ENCODE measurements at regions of chr11 and their contacts with region 1.

Region 1: DNA sequence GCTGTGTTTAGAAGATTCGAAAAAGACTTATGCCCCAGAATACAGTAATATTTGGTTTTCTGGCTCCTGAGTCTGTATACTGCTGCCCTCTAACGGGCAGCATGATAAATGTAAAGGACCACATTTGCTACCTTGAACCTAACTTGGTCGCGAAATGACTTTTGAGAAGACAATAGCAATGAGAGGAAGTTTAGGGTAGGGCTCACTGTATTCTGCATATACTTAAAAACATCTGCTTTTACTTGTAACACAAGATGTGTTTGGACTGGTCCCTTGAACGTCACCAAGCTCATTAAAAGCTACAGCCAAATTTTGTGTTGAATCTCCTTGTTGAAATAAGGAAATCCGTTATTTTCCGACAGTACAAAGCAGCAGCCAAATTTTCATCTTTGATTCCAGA is 309.1 kb downstream of the SWAP70 start:
- DNase-seq: peak; percentile 28
- H3K4me3 Mint-ChIP-seq: no peak overlapping the region
- H3K27ac Mint-ChIP-seq: no peak overlapping the region
- H3K4me1 Mint-ChIP-seq: no peaks in the 10 kb centered on the region
- H3K27me3 Mint-ChIP-seq: no peaks in the 10 kb centered on the region

Region 2: GRCh38 chr11:9861860-9862725 is 110.9 kb before region 1 on chr11:
- CTCF ChIA-PET with region 1: interaction called, 27 read pairs
- POLR2A ChIA-PET with region 1: no interaction called
- intact Hi-C with region 1: loop called (anchors 1 kb)
- DNase-seq: peak; percentile 65
- H3K4me3 Mint-ChIP-seq: no peak overlapping the region
- H3K27ac Mint-ChIP-seq: no peak overlapping the region
- H3K4me1 Mint-ChIP-seq: peaks cover 27% of the 10 kb centered on the region
- H3K27me3 Mint-ChIP-seq: no peaks in the 10 kb centered on the region

Region 3: DNA sequence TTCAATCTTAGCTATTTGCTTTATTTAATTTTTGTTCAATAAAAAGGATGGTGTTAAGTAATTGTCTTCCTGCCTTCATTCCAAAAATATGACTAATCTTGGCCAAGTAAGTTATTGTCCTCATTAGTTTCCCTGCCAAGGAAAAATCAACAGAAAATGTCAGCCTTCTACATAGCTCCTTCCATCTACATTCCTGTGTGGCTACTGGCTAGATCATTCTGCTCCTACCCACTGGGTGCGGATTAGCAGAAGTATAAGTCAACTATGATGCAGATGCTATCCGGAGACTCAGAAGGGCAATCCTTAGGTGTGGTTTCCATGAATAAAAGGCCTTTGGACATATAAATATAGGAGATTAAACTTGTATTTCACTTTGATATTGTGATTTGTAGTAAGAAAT is 166.7 kb after region 1 on chr11:
- CTCF ChIA-PET with region 1: no interaction called
- POLR2A ChIA-PET with region 1: no interaction called
- intact Hi-C with region 1: no loop called
- DNase-seq: no peak
- H3K4me3 Mint-ChIP-seq: no peak overlapping the region
- H3K27ac Mint-ChIP-seq: no peak overlapping the region
- H3K4me1 Mint-ChIP-seq: no peaks in the 10 kb centered on the region
- H3K27me3 Mint-ChIP-seq: no peaks in the 10 kb centered on the region

Region 4: DNA sequence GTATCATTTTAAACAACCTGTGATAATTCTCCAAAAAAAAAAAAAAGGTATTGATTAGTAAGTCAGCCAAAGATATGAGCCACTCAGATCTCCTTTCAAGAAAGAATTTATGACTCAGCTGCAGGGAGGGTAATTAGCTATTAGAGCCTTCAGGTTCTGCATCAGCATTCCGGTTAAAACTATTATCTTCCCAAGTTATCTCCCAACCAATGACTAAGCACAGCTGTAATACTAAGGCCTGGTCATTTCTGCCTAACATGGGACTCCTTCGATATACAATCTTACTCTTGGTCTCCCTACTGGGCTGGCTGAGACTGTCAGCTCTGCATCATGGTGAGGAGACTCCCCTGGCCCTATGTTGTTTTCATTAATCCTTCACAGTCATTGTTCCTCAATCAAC is 260.6 kb after region 1 on chr11:
- CTCF ChIA-PET with region 1: no interaction called
- POLR2A ChIA-PET with region 1: no interaction called
- intact Hi-C with region 1: no loop called
- DNase-seq: no peak
- H3K4me3 Mint-ChIP-seq: no peak overlapping the region
- H3K27ac Mint-ChIP-seq: no peak overlapping the region
- H3K4me1 Mint-ChIP-seq: no peaks in the 10 kb centered on the region
- H3K27me3 Mint-ChIP-seq: no peaks in the 10 kb centered on the region

Region 5: DNA sequence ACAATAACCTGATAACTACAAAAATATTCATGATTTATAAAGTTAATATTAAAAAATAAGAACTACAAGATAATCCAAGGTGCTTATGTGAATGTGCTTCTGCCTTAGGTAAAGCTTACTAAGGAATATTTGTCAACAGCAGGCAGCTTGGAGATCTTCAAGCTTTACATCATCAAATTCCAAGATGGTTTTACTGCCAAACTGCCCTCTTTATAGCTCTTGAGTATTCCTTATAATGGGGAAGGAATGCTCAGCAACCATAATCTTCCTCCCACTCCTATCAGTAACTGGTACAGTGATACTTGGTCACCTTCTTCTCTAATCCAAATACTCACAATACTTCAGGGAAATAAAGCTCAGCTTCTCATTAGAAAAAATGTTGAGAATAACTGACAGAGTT is 290.9 kb after region 1 on chr11:
- CTCF ChIA-PET with region 1: no interaction called
- POLR2A ChIA-PET with region 1: no interaction called
- intact Hi-C with region 1: no loop called
- DNase-seq: no peak
- H3K4me3 Mint-ChIP-seq: no peak overlapping the region
- H3K27ac Mint-ChIP-seq: no peak overlapping the region
- H3K4me1 Mint-ChIP-seq: no peaks in the 10 kb centered on the region
- H3K27me3 Mint-ChIP-seq: no peaks in the 10 kb centered on the region

Measured in activated CD4-positive, alpha-beta memory T cell treated with anti-CD3 and anti-CD28 coated beads for 36 hours (primary cell).